ENCODE measurements at regions of chr12 and their contacts with region 1.

Region 1: DNA sequence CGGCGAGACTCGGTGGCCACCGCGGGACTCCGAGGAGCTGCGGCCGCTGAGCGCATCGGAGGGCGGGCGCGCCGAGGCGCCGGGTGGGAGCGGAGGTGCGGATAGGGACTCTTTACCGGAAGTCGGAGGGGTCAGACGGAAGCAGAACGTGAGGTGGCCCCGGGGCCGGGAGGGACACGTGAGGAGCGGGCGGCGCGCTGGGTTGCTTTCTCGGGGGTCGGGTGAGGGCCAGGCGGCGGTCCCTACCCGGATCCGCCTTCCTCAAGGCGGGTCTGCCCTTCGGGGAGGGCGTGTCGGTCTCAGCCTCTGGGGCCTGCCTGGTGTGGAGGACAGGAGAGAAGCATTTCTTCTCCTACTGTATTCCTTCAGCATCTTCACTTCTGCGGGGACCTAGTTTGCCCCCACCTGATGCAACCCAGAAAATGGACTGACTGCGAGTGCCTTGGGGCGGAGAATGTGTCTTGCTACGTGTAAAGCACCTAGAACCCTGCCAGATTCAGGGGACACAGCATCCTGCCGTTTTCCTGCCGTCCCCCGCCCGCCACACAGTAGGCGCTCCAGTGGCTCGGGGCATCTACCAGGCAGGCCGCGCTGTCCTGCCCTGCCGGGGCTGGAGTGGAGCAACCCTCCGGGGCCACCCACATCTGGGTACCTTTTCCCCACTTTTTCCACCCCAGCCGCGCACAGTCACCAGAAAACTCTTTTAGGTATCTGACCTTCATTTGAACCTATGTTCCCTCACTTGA is 517 bp upstream of the ATXN2 start:
- DNase-seq: peak; percentile 93

Region 2: DNA sequence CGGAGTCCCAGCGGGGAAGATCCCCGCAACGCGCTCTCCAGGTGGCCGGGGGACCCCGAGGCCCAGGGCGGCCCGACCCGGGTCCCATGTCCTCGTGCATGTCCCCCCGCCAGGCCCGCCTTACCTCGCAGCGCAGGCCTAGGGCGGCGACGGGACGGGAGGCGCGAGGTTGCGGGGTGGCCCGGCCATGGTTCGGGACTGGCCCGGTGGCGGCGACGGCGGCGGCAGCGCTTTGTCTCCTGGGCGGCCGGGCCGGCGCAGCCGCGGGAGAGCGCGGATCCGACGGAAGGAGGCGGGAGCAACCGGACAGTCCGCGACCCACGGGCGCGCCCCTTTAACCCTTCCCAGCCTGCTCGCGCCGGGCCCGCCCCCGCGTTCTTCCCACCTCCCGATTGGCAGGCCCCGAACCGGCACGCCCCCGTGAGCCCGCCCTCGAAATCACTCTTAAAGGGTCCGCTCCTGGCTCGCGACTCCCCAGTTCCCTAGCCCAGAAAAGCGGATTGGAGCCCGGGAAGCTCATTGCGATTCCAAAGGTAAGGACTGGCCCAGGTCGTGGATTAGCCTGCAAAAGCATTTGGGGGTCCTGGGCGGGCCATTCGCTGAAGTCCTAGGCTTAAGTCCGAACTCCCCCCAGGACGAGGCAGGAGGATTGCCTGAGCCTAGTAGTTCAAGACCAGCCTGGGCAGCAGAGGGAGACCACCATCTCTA is 230.7 kb before region 1 on chr12 and contains the start of gene PHETA1:
- intact Hi-C with region 1: loop called (anchors 10 kb)
- DNase-seq: peak; percentile 96
- total RNA-seq, gene PHETA1: 18.6 TPM

Region 3: GRCh38 chr12:111462210-111462769 is 137.3 kb before region 1 on chr12:
- intact Hi-C with region 1: no loop called
- DNase-seq: no peak

Region 4: DNA sequence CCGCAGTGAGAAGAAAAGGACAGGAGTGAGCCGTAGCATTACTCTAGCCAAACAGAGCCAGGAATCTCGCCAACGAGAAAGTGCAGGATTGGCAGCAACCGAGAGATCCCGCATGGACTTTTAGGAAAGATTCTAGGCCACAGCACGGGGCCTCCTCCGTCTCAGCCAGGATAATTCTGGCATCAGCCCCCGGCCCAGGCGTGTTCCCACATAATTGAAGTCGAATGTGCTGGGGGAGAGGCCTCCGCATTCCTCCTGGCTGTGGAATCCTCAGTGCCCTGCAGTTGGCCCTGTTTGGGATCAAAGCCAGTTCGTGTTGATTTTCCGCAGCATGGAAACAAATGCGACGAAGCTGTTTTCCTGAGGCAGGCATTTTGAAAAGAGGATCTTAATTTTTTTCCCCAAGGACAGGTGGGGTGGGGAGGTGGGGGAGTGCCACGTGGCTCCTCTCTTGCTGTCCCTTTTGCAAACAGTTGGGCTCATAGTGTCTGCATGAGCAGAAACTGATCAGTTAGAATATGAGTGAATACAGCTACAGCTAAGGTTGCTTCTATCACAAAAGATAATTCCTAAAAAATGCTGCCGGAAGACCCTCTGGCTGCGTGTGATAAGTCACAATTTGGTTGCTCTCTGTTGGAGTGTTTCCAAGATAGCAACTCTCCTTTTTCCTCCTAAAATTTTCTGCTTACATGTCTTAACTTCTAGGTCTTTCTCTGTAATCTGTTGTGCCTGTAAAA is 36.7 kb after region 1 on chr12:
- intact Hi-C with region 1: loop called (anchors 5 kb)
- DNase-seq: peak; percentile 75

Region 5: GRCh38 chr12:111685744-111686517 is 86.3 kb after region 1 on chr12 and contains the starts of genes ACAD10 and BRAP:
- intact Hi-C with region 1: loop called (anchors 2 kb)
- DNase-seq: peak; percentile 97
- total RNA-seq, gene ACAD10: 30.8 TPM
- total RNA-seq, gene BRAP: 13.9 TPM

Region 6: GRCh38 chr12:112061137-112061536 is 461.5 kb after region 1 on chr12:
- intact Hi-C with region 1: no loop called
- DNase-seq: no peak